Activated T-helper 2 cell treated with anti-CD3 and anti-CD28 coated beads, Interferon-gamma antibody, Interleukin-2, Interleukin-4, amounts not matched to agents 10 μg/mL and 5 μg/mL and 100 μg/mL, durations not matched to agents 14 hours and 24 hours and 36 hours (primary cell): ENCODE measurements at regions of chrX and their contacts with region 1.

Region 1: DNA sequence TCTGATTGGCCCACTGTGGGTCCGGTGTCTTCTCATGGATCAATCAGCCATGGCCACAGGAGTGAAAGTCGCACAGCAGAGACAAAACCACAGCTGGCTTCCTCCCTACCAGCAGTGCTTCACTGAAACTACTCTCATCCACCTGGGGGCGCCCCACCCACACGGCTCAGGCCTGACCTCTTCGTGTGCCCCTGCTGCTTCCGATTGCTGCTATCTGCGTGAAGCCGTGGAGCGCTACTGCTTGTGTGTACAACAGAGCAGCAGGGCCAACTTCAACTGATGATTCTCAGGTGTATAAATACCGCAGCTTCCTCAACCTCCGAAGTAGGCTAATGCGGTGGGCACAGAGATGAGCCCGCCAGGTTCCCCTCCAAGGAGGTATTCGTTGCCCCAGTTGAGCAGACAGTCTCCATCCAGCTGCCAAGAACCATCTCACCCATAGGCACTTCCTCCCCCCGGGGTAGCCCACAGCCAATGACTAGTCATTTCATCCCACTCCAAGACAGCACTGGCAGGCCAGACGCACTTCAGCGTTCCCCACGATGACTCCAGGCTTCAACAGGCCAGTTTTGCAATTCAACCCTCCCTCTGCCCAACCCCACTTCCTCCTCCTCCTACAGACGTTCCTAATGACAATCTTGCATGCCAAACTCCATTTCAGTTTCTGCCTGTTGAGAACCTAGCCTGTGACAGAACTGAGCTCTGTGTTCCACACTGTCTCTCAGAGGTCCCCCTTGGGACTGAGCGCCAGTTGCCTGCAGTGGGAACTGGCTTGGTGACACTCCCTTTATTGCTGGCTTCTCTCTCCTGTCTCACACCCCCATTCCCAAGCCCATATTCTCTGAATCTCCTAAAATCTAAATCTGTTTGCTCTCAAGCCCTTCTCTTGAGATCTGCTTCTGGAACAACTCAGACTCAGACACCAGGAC is 41.3 kb upstream of the ATP6AP2 start:
- DNase-seq: peak; percentile 60
- H3K4me3 Mint-ChIP-seq: no peak overlapping the region
- H3K27ac Mint-ChIP-seq: peak overlapping the region; percentile 55
- H3K4me1 Mint-ChIP-seq: peaks cover 20% of the 10 kb centered on the region
- H3K27me3 Mint-ChIP-seq: peaks cover 15% of the 10 kb centered on the region

Region 2: DNA sequence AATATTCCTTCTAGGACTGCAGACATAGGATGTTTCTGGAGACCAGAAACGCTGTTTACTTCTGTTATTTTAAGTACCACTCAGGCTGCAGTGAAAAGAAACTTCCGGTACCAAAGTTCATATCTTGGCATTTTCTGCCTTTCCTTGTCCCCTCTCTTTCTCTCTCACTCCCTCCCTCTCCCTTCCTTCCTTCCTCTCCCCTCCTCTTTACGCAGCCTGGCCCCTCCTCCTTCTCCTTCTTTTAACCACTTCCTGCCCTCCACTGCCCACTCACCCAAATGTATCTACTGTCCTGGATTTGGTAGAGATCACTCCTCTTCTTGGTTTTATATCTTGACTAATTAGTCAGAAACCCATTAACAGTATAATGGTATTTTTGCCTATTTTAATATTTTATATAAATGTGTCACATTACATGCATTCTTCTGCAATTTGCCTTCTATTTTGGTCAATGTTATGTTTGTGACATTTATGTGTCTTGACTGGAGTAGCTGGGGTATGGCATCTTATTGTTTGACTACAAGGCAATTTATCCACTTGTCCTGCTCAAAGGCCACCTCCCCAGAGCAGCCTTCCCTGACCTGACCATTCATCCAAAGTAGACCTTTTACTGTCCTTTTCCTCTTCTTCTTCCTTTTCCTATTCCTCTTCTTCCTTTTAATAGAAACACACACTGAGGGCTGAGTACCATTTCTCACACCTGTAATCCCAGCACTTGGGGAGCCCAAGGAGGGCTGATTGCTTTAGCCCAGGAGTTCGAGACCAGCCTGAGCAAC is 498.6 kb before region 1 on chrX:
- intact Hi-C with region 1: no loop called
- DNase-seq: no peak
- H3K4me3 Mint-ChIP-seq: no peak overlapping the region
- H3K27ac Mint-ChIP-seq: peak overlapping the region; percentile 55
- H3K4me1 Mint-ChIP-seq: peaks cover 19% of the 10 kb centered on the region
- H3K27me3 Mint-ChIP-seq: no peaks in the 10 kb centered on the region

Region 3: GRCh38 chrX:40792433-40792832 is 253.0 kb after region 1 on chrX:
- intact Hi-C with region 1: loop called (anchors 10 kb)
- DNase-seq: no peak
- H3K4me3 Mint-ChIP-seq: no peak overlapping the region
- H3K27ac Mint-ChIP-seq: no peak overlapping the region
- H3K4me1 Mint-ChIP-seq: peaks cover 2% of the 10 kb centered on the region
- H3K27me3 Mint-ChIP-seq: peaks cover 6% of the 10 kb centered on the region